A549 (cell line): ENCODE measurements at regions of chr1 and their contacts with region 1.

Region 1: GRCh38 chr1:17045634-17046333 is 8.0 kb downstream of the SDHB start:
- DNase-seq: peak; percentile 51 to 63
- ATAC-seq: peak in 1 of 2 experiments; percentile 58; a peak in 2 of 6 replicates
- H3K4me3 ChIP-seq: no peak overlapping the region
- H3K27ac ChIP-seq: no peak overlapping the region
- H3K4me1 ChIP-seq: peaks cover 6% of the 10 kb centered on the region; the same call in 1 of the 3 replicates
- CTCF ChIP-seq: peak; percentile 73
- EP300 ChIP-seq: no peak
- POLR2A ChIP-seq: no peak
- RAD21 ChIP-seq: peak; percentile 69 to 76

Region 2: GRCh38 chr1:16946646-16947045 is 99.1 kb before region 1 on chr1:
- CTCF ChIA-PET with region 1: interaction called, 80 read pairs
- POLR2A ChIA-PET with region 1: no interaction called
- DNase-seq: no peak
- ATAC-seq: no peak
- H3K4me3 ChIP-seq: no peak overlapping the region
- H3K27ac ChIP-seq: no peak overlapping the region
- H3K4me1 ChIP-seq: no peaks in the 10 kb centered on the region
- CTCF ChIP-seq: no peak
- EP300 ChIP-seq: no peak
- POLR2A ChIP-seq: no peak
- RAD21 ChIP-seq: no peak

Region 3: DNA sequence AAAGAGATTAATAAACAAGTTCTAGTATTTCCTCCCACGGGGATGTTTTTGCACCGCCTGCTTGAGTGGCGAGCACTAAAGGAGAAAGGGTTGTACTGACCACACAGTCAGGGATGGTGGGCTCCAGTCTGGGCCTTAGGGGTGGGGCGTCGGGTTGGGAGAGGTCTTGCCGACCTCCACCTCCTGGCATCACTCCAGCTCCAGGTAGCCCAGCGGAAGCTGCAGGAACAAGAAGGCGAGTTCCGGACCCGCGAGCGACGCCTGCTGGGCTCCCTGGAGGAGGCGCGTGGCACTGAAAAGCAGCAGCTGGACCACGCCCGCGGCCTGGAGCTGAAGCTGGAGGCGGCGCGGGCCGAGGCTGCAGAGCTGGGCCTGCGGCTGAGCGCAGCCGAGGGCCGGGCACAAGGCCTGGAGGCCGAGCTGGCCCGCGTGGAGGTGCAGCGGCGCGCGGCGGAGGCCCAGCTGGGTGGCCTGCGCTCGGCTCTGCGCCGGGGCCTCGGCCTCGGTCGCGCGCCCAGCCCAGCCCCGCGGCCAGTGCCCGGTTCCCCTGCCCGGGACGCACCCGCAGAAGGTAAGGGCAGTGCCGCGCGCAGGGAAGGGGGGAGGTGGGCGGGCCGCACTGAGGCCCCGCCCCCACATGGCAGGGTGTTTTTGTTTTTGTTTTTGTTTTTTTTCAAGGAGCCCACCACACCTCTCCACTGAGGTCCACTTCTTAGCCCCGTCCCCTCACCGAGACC is 85.1 kb before region 1 on chr1:
- CTCF ChIA-PET with region 1: interaction called, 54 read pairs
- POLR2A ChIA-PET with region 1: no interaction called
- DNase-seq: peak; percentile 41 to 87
- ATAC-seq: peak; percentile 92 to 98
- H3K4me3 ChIP-seq: peak overlapping the region; percentile 50
- H3K27ac ChIP-seq: peak overlapping the region; percentile 84 to 99
- H3K4me1 ChIP-seq: peaks cover 13% of the 10 kb centered on the region
- CTCF ChIP-seq: peak; percentile 66
- EP300 ChIP-seq: no peak
- POLR2A ChIP-seq: peak; percentile 46
- RAD21 ChIP-seq: peak; percentile 20 to 49; a peak in 3 of 5 replicates

Region 4: GRCh38 chr1:17021896-17022295 is 23.9 kb before region 1 on chr1:
- CTCF ChIA-PET with region 1: interaction called, 15 read pairs
- POLR2A ChIA-PET with region 1: no interaction called
- DNase-seq: no peak
- ATAC-seq: no peak
- H3K4me3 ChIP-seq: no peak overlapping the region
- H3K27ac ChIP-seq: no peak overlapping the region
- H3K4me1 ChIP-seq: no peaks in the 10 kb centered on the region
- CTCF ChIP-seq: no peak
- EP300 ChIP-seq: no peak
- POLR2A ChIP-seq: no peak
- RAD21 ChIP-seq: no peak

Region 5: GRCh38 chr1:17032741-17033140 is 13.0 kb before region 1 on chr1:
- CTCF ChIA-PET with region 1: interaction called, 15 read pairs
- POLR2A ChIA-PET with region 1: no interaction called
- DNase-seq: no peak
- ATAC-seq: no peak
- H3K4me3 ChIP-seq: no peak overlapping the region
- H3K27ac ChIP-seq: no peak overlapping the region
- H3K4me1 ChIP-seq: no peaks in the 10 kb centered on the region
- CTCF ChIP-seq: no peak
- EP300 ChIP-seq: no peak
- POLR2A ChIP-seq: no peak
- RAD21 ChIP-seq: no peak

Region 6: GRCh38 chr1:17207966-17208418 is 162.2 kb after region 1 on chr1:
- CTCF ChIA-PET with region 1: no interaction called
- POLR2A ChIA-PET with region 1: no interaction called
- DNase-seq: peak; percentile 70 to 79
- ATAC-seq: peak; percentile 67 to 80; a peak in 5 of 6 replicates
- H3K4me3 ChIP-seq: no peak overlapping the region
- H3K27ac ChIP-seq: peak overlapping the region; percentile 70 to 89
- H3K4me1 ChIP-seq: peaks cover 46% of the 10 kb centered on the region
- CTCF ChIP-seq: no peak
- EP300 ChIP-seq: peak in 1 of 2 experiments; percentile 24; a peak in 1 of 5 replicates
- POLR2A ChIP-seq: no peak
- RAD21 ChIP-seq: no peak